ENCODE measurements at regions of chr5 and their contacts with region 1.

Region 1: DNA sequence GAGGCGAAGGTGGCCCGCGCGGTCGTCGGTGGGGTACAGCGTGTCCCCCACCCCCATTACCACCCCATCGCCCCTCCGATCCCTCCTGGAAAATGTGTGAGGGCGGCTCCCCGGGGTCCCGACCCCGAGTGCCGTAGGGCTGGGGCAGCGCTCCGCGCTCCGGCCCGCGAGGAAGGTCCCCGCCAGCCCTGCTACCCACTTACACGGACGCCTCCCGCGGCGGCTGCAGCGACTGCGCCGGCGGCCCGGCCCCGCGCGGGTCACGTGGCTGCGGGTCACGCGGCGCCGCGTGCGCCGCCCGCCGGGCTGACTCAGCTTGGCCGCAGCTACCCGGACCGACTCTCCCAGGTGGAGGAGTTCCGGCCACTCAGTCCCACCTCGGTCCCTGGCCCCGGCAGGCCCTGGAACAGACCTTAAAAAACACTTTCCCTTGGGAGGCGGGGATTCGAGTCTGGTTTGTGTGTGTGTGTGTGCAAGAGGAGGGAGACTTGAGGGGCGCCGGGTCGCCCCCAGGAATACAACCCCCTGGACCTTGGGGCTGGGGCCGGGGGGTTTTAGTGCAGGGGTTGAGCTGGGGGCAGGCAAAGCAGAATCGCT is at the start of gene GNPDA1:
- DNase-seq: peak; percentile 93
- total RNA-seq, gene GNPDA1: 17.3 TPM

Region 2: GRCh38 chr5:142053426-142054151 is 40.7 kb after region 1 on chr5:
- intact Hi-C with region 1: loop called (anchors 5 kb)
- DNase-seq: no peak

Region 3: GRCh38 chr5:142063878-142064331 is 51.0 kb after region 1 on chr5:
- intact Hi-C with region 1: loop called (anchors 5 kb)
- DNase-seq: peak; percentile 84

Region 4: DNA sequence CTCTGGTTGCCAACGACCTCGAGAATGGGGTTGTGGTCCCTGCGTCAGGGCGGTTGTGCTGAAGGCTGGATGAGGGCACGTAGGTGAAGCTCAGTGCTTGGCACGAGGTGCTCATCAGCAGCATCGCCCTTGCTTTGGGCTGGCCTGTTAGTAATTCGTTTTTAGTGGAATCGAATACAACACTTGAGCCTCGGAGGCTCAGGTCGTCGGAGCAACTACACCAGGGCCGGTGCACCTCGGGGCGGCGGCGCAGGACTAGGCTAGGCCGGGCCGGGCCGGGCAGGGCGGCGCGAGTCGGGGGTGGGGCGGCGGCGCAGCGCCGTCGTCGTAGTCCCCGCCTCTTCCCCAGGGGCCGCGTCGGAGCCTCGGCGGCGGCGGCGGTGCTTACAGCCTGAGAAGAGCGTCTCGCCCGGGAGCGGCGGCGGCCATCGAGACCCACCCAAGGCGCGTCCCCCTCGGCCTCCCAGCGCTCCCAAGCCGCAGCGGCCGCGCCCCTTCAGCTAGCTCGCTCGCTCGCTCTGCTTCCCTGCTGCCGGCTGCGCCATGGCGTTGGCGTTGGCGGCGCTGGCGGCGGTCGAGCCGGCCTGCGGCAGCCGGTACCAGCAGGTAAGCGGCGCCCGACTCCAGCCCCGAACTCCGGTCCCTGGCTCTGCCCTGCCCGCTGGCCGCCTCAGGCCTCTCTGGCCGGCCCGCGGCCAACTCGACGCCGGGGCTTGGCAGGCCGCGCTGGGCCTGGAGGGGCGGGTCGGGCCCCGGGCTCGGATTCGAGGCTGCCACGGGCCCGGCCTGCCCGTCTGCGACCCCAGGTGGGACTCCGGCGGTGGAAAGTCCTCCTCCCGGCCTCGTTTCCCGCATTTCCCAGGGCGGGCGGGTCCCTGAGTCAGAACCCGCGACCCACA is 95.8 kb after region 1 on chr5 and contains the start of gene NDFIP1:
- intact Hi-C with region 1: loop called (anchors 2 kb)
- DNase-seq: peak; percentile 93
- total RNA-seq, gene NDFIP1: 58.8 TPM

Region 5: DNA sequence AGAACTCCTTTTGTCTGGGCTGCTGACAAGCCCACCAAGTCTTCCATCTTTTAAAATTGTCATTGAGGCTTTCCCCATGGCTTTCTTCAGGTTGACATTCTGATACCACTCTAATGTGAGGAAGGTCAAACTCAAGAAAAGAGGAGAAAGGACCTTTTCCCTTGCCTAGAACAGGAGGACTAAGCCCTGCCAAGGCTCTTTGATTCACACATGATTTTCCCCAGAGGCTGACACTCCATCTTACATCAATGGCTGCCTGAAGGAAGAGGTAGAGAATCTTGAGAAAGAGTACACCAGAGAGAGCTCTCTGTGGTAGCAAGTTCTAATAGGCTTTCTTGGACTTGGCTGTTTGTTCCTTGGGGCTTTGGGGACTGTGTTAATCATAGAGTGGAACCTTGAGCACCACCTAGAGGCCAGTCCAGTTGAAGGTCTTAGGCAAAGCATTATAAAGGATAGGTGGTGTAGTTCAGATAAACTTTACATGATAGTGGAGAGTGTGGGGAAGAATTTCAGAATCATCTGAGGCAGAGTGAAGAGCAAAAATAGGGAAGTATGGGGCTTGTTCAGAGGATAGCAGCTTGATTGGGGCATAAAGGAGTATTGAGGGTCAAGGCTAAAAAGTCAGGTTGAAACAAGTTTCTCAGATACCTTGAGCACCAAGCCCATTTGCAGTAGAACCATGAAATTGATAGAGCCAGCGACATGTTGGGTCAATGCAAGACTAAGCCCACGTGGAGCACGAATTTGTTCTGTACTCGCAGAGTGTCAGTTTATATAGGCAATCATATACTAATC is 132.4 kb after region 1 on chr5:
- intact Hi-C with region 1: loop called (anchors 5 kb)
- DNase-seq: no peak

Region 6: DNA sequence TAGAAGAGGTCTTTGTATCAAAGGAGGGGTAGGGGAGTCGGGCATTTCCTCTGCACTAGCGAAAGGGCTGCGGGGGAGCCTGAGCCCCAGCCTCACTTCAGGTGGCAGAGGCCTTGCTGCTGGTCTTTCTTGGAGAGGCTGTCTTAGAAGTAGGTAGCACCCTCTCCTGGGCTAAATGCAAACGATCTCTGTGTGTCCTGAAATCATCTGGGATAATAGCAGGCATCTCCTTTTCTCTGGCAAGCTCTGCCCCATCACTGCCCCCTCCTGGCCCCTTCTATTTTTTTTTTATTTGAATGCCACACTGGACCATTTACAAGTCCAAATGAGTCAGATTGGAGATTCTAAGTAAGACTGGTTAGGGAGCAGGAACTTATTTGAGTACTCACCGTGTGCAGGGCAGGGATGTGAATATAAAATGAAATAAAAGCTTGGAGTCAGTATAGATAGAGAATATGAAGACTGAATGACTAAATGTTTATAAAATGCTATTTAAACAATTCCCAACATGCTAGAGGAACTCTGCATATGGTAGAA is 535.9 kb after region 1 on chr5:
- intact Hi-C with region 1: loop called (anchors 10 kb)
- DNase-seq: no peak